ENCODE measurements at regions of chr16 and their contacts with region 1.

Region 1: GRCh38 chr16:2251483-2252240 is at the start of gene ECI1:
- DNase-seq: peak; percentile 65 to 81 (median 72)
- H3K4me3 ChIP-seq: peak within 1 kb of the TSS in 1 of 2 donors; percentile 66
- H3K4me3 Mint-ChIP-seq: peak within 1 kb of the TSS; percentile 87 to 93 (median 90)
- H3K27ac ChIP-seq: peak within 1 kb of the TSS; percentile 61
- H3K27ac Mint-ChIP-seq: peak within 1 kb of the TSS; percentile 88 to 96 (median 91)
- H3K4me1 ChIP-seq: peaks cover 10% of the 10 kb centered on the region
- H3K4me1 Mint-ChIP-seq: peaks cover 1 to 12% (median 5%) of the 10 kb centered on the region in 4 donors
- H3K27me3 ChIP-seq: no peaks in the 10 kb centered on the region
- H3K27me3 Mint-ChIP-seq: no peaks in the 10 kb centered on the region
- total RNA-seq, gene ECI1: 33.0 to 36.6 TPM

Region 2: DNA sequence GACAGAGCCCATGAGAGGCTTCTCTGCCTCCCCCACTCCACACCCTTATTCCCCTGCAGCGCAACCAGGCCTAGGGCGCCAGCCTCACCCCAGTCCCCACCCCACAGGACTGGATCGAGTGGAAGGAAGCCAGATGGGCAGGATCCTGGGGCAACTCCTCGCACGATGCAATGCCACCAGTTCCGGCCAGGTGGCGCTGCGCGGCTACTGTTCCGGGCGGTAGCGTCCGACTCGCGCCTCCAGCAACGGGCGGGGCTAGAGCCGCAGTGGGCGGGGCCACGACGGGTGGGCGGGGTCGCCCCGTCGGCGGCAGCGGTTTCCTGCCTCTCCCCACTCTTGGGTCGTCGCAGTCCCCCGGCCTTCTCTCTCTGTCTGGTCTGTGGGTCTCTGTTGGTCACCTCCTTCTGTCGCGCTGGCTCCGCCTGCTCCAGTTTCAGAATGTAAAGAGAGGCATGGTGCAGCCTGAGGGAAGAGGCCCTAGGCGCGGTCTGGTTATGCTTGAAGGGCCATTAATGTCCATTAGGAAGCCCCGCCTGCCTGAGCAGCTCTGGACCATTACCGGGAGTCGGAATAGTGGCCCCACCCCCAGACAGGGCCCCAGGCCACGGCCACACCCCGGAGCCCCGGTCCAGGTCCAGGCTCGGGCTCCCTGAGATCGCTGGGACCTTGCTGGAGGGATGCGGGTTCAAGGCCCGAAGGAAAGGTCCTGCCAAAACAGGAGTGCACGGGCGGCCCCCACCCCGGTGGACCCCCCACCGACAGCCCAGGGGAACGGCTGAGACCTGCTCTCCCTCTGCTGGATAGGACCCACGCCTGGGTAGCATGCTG is 228.3 kb before region 1 on chr16:
- CTCF ChIA-PET with region 1: interaction called, 4 read pairs
- POLR2A ChIA-PET with region 1: interaction called, 4 read pairs
- intact Hi-C with region 1: loop called (anchors 1 kb)
- DNase-seq: peak; percentile 89 to 95 (median 91)
- H3K4me3 ChIP-seq: peak overlapping the region in 1 of 2 donors; percentile 30
- H3K4me3 Mint-ChIP-seq: peak overlapping the region; percentile 6 to 76 (median 70)
- H3K27ac ChIP-seq: peak overlapping the region; percentile 44
- H3K27ac Mint-ChIP-seq: peak overlapping the region in 6 of 7 donors; percentile 60 to 91 (median 76)
- H3K4me1 ChIP-seq: peaks cover 29% of the 10 kb centered on the region
- H3K4me1 Mint-ChIP-seq: peaks cover 9 to 26% (median 17%) of the 10 kb centered on the region in 4 donors
- H3K27me3 ChIP-seq: peaks cover 12% of the 10 kb centered on the region
- H3K27me3 Mint-ChIP-seq: peaks cover 15 to 16% of the 10 kb centered on the region in 2 donors

Region 3: GRCh38 chr16:2205104-2205966 is 46.3 kb before region 1 on chr16 and contains the start of gene MLST8:
- CTCF ChIA-PET with region 1: interaction called, 4 read pairs
- POLR2A ChIA-PET with region 1: interaction called, 23 read pairs
- intact Hi-C with region 1: no loop called
- DNase-seq: peak; percentile 87 to 99 (median 97)
- H3K4me3 ChIP-seq: peak within 1 kb of the TSS; percentile 88 to 89
- H3K4me3 Mint-ChIP-seq: peak within 1 kb of the TSS; percentile 79 to 88 (median 84)
- H3K27ac ChIP-seq: peak within 1 kb of the TSS; percentile 90
- H3K27ac Mint-ChIP-seq: peak within 1 kb of the TSS; percentile 69 to 95 (median 89)
- H3K4me1 ChIP-seq: peaks cover 26% of the 10 kb centered on the region
- H3K4me1 Mint-ChIP-seq: peaks cover 12 to 29% (median 18%) of the 10 kb centered on the region in 4 donors
- H3K27me3 ChIP-seq: no peaks in the 10 kb centered on the region
- H3K27me3 Mint-ChIP-seq: peaks cover 0 to under 1% of the 10 kb centered on the region in 2 donors
- total RNA-seq, gene MLST8: 28.1 to 31.1 TPM

Region 4: GRCh38 chr16:2213817-2214720 is 37.6 kb before region 1 on chr16:
- CTCF ChIA-PET with region 1: no interaction called
- POLR2A ChIA-PET with region 1: interaction called, 25 read pairs
- intact Hi-C with region 1: loop called (anchors 2 kb)
- DNase-seq: no peak
- H3K4me3 ChIP-seq: peak overlapping the region in 1 of 2 donors; percentile 51
- H3K4me3 Mint-ChIP-seq: peak overlapping the region; percentile 74 to 80 (median 77)
- H3K27ac ChIP-seq: peak overlapping the region; percentile 55
- H3K27ac Mint-ChIP-seq: peak overlapping the region in 4 of 7 donors; percentile 13 to 83 (median 28)
- H3K4me1 ChIP-seq: peaks cover 20% of the 10 kb centered on the region
- H3K4me1 Mint-ChIP-seq: peaks cover 8 to 27% (median 17%) of the 10 kb centered on the region in 4 donors
- H3K27me3 ChIP-seq: no peaks in the 10 kb centered on the region
- H3K27me3 Mint-ChIP-seq: no peaks in the 10 kb centered on the region

Region 5: DNA sequence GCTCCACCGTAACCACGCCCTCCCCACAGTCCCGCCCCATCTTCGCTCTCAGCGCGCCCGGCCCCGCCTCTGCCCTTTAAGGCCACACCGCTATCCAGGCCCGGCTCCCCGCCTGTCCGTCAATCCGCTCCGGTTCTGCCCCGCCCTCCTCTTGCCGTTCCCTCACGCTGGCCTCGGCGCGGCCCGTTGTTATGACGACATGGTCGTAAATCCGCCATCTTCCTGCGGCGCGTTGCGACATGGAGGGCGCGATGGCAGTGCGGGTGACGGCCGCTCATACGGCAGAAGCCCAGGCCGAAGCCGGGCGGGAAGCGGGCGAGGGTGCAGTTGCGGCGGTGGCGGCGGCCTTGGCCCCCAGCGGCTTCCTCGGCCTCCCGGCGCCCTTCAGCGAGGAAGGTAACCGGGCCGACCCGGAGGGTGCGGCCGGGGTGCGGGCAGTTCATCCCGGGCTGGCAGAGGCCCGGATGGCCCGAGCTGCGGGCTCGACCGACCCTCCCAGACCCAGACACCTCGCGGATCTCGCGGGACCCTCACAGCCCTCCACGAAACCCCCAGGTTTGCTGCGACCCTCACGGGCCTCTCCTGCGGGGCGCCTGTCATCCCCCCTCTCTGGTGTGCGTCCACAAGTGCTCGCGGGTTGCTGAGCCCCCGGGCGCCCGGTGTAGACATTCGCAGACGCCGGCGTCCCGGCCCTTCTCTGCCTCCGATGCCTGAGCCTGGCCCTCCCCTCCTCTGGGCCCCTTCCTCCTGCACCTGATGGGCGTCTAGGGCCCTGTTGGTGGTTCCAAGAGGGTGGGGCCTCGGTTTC is 28.1 kb before region 1 on chr16 and contains the start of gene E4F1:
- CTCF ChIA-PET with region 1: interaction called, 4 read pairs
- POLR2A ChIA-PET with region 1: interaction called, 20 read pairs
- intact Hi-C with region 1: loop called (anchors 1 kb)
- DNase-seq: peak; percentile 97 to 99 (median 99)
- H3K4me3 ChIP-seq: peak within 1 kb of the TSS; percentile 81 to 84
- H3K4me3 Mint-ChIP-seq: peak within 1 kb of the TSS; percentile 85 to 93 (median 90)
- H3K27ac ChIP-seq: peak within 1 kb of the TSS; percentile 90
- H3K27ac Mint-ChIP-seq: peak within 1 kb of the TSS; percentile 82 to 94 (median 89)
- H3K4me1 ChIP-seq: peaks cover 14% of the 10 kb centered on the region
- H3K4me1 Mint-ChIP-seq: peaks cover 7 to 27% (median 19%) of the 10 kb centered on the region in 4 donors
- H3K27me3 ChIP-seq: no peaks in the 10 kb centered on the region
- H3K27me3 Mint-ChIP-seq: no peaks in the 10 kb centered on the region
- total RNA-seq, gene E4F1: 46.5 to 49.7 TPM

Measured in CD4-positive, alpha-beta memory T cell (primary cell).